PC-3 (cell line): ENCODE measurements at regions of chr14 and their contacts with region 1.

Region 1: GRCh38 chr14:50599700-50600444 is 39.9 kb downstream of the ATL1 start:
- DNase-seq: peak; percentile 86
- ATAC-seq: peak; percentile 66
- H3K4me3 ChIP-seq: peak overlapping the region; percentile 30; the same call in 1 of the 2 replicates
- H3K27ac ChIP-seq: peak overlapping the region; percentile 44
- H3K4me1 ChIP-seq: peaks cover 32% of the 10 kb centered on the region
- H3K27me3 ChIP-seq: no peaks in the 10 kb centered on the region
- CTCF ChIP-seq: peak; percentile 92

Region 2: GRCh38 chr14:49920935-49921334 is 678.9 kb before region 1 on chr14:
- CTCF ChIA-PET with region 1: no interaction called
- POLR2A ChIA-PET with region 1: no interaction called
- intact Hi-C with region 1: no loop called
- DNase-seq: no peak
- ATAC-seq: no peak
- H3K4me3 ChIP-seq: no peak overlapping the region
- H3K27ac ChIP-seq: no peak overlapping the region
- H3K4me1 ChIP-seq: no peaks in the 10 kb centered on the region
- H3K27me3 ChIP-seq: no peaks in the 10 kb centered on the region
- CTCF ChIP-seq: no peak

Region 3: GRCh38 chr14:50333006-50333509 is 266.8 kb before region 1 on chr14:
- CTCF ChIA-PET with region 1: no interaction called
- POLR2A ChIA-PET with region 1: no interaction called
- intact Hi-C with region 1: no loop called
- DNase-seq: peak; percentile 70
- ATAC-seq: peak; percentile 53
- H3K4me3 ChIP-seq: no peak overlapping the region
- H3K27ac ChIP-seq: no peak overlapping the region
- H3K4me1 ChIP-seq: peaks cover 12% of the 10 kb centered on the region
- H3K27me3 ChIP-seq: no peaks in the 10 kb centered on the region
- CTCF ChIP-seq: no peak

Region 4: GRCh38 chr14:50542941-50543418 is 56.9 kb before region 1 on chr14:
- CTCF ChIA-PET with region 1: interaction called, 8 read pairs
- POLR2A ChIA-PET with region 1: no interaction called
- intact Hi-C with region 1: loop called (anchors 1 kb)
- DNase-seq: peak; percentile 87
- ATAC-seq: peak; percentile 82
- H3K4me3 ChIP-seq: no peak overlapping the region
- H3K27ac ChIP-seq: no peak overlapping the region
- H3K4me1 ChIP-seq: peaks cover 16% of the 10 kb centered on the region
- H3K27me3 ChIP-seq: no peaks in the 10 kb centered on the region
- CTCF ChIP-seq: peak; percentile 91

Region 5: DNA sequence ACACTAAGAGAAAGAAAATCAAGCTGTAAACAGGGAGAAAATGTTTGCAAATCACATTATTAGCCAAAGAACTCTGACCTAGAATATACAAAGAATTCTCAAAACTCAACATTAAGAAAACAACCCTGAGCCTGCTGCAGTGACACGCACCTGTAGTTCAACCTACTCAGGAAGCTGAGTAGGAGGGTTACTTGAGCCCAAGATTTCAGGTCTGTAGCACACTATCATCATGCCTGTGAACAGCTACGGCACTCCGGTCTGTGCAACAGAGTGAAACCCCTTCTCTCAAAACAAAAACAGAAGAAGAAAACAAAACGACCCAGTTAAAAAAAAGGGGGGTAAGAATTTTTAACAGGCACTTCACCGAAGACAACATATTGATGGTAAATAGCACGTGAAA is 47.4 kb after region 1 on chr14:
- CTCF ChIA-PET with region 1: interaction called, 4 read pairs
- POLR2A ChIA-PET with region 1: no interaction called
- intact Hi-C with region 1: loop called (anchors 2 kb)
- DNase-seq: no peak
- ATAC-seq: no peak
- H3K4me3 ChIP-seq: no peak overlapping the region
- H3K27ac ChIP-seq: peak overlapping the region; percentile 51
- H3K4me1 ChIP-seq: peaks cover 36% of the 10 kb centered on the region
- H3K27me3 ChIP-seq: no peaks in the 10 kb centered on the region
- CTCF ChIP-seq: no peak

Region 6: DNA sequence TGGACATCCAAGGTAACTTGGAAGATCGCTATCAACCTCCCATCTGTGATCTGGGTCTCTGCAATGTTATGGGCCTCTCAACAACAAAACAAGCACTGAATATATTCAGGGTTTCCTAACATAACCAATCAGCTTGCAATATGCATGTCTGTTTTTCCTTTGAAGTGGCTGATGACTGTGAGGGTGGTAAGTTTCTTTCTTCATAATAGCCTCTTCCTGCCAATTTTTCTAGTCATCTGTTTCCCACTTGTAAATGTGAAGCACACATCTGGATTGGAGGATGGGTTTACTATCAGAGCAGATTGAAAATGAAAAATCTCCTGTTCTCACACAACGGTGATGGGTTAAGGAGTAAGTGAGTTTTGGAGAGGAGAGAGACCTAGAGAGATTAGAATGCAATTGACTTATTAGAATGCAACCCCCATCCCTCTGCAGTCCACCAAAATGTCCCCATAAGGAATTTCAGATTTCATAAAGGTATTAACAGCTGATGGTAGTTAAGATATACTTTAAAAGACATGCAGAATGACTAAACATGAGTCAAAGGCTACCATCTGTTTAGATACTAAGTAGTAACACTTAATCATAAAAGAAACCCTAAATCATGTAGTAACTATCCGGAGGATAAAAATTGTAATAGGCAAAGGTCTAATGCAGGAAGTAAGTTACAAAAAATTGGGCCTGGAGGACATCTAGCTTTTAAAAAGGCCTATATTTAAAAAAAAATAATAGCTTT is 126.7 kb after region 1 on chr14:
- CTCF ChIA-PET with region 1: interaction called, 4 read pairs
- POLR2A ChIA-PET with region 1: no interaction called
- intact Hi-C with region 1: loop called (anchors 1 kb)
- DNase-seq: peak; percentile 77
- ATAC-seq: peak; percentile 91
- H3K4me3 ChIP-seq: no peak overlapping the region
- H3K27ac ChIP-seq: peak overlapping the region; percentile 48
- H3K4me1 ChIP-seq: peaks cover 21% of the 10 kb centered on the region
- H3K27me3 ChIP-seq: no peaks in the 10 kb centered on the region
- CTCF ChIP-seq: no peak

Region 7: GRCh38 chr14:50762001-50762930 is 162.4 kb after region 1 on chr14:
- CTCF ChIA-PET with region 1: interaction called, 5 read pairs
- POLR2A ChIA-PET with region 1: interaction called, 20 read pairs
- intact Hi-C with region 1: loop called (anchors 1 kb)
- DNase-seq: peak; percentile 86
- ATAC-seq: peak; percentile 36
- H3K4me3 ChIP-seq: peak overlapping the region; percentile 25; the same call in 1 of the 2 replicates
- H3K27ac ChIP-seq: peak overlapping the region; percentile 94
- H3K4me1 ChIP-seq: peaks cover 29% of the 10 kb centered on the region
- H3K27me3 ChIP-seq: no peaks in the 10 kb centered on the region
- CTCF ChIP-seq: no peak